ENCODE measurements at regions of chr16 and their contacts with region 1.

Region 1: DNA sequence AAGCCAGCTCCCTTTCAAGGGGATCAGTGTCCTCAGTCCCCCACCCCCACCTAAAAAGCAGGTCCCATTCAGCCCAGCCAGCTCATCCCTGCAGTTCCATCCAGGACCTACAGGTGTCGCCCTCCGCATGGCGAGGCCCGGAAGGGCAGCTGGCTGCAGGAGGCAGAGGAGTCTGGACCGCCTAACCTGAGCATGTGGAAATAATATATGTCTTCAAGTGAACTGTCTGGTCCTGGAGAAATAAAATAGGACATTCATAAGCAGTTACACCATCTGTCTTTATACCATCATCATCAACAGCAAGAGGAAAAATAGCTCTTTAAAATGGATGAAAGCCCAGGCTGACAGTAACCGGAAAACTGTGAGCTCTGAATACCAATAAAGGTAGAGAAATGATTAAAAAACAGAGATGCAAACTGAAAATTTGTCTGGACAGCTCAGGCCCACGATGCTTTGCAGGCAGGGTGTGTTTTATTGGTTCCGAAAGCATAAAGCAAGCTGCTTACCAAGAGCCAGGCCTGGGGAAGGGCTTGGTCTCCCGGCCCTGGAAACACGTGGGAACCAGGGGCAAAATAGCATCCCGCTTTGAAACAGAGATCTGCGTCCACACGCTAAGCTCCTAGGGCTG is 215.2 kb downstream of the ZFHX3 start:
- DNase-seq: peak; percentile 80
- H3K4me3 Mint-ChIP-seq: no peak overlapping the region
- H3K27ac Mint-ChIP-seq: no peak overlapping the region
- H3K4me1 Mint-ChIP-seq: peaks cover 4% of the 10 kb centered on the region
- H3K27me3 Mint-ChIP-seq: no peaks in the 10 kb centered on the region
- CTCF ChIP-seq: peak; percentile 89

Region 2: DNA sequence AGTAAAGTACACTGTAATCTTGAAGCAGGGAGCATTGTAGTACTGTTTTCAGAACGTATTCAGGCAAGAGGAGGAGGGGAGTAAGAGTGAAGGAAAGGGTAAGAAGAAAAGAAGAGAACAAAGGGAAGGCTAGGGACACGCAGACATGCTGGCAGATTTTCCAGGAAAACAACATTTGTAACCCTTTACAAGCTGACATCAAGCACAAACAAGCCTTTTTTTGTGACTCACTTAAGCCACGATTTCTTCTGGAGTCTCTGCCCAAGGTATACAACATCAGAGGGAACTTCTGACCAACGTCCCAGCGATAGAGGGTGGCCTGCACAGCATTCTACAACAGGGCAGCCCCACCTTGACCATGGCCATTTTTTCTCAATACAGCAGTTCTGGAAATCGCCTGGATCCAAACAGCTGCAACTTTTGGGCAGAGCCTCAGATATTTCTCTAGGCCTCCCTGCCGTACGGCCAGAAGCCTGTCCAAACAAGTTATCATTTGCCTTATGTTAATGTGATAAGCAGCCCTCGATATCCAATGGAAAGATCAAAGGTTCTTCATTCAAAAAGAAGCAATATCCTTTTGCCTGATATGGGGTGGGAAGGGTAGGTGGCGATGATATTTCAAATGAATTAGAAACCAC is 32.1 kb before region 1 on chr16:
- CTCF ChIA-PET with region 1: interaction called, 10 read pairs
- POLR2A ChIA-PET with region 1: no interaction called
- intact Hi-C with region 1: no loop called
- DNase-seq: no peak
- H3K4me3 Mint-ChIP-seq: no peak overlapping the region
- H3K27ac Mint-ChIP-seq: no peak overlapping the region
- H3K4me1 Mint-ChIP-seq: no peaks in the 10 kb centered on the region
- H3K27me3 Mint-ChIP-seq: no peaks in the 10 kb centered on the region
- CTCF ChIP-seq: no peak

Region 3: DNA sequence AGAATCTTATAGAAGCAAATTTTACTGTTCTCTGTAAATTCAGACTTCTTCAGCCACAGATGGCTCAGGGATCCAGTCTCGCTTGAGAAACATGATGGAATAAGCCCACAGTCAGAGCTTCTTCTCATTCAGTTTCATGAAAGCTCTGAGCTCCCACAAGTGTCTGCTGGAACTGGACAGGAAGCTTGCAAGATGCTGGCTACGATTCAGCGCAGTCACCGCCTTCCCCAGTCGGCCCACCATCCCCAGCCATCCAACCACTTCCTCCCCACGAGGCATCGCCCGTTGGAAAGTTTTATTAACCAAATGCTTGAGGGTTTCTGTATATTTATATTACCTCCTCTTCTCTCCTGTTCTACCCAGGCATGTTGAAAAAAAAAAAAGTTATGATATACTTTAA is 43.5 kb after region 1 on chr16:
- CTCF ChIA-PET with region 1: interaction called, 21 read pairs
- POLR2A ChIA-PET with region 1: interaction called, 3 read pairs
- intact Hi-C with region 1: no loop called
- DNase-seq: peak; percentile 77
- H3K4me3 Mint-ChIP-seq: peak overlapping the region; percentile 38
- H3K27ac Mint-ChIP-seq: peak overlapping the region; percentile 93
- H3K4me1 Mint-ChIP-seq: peaks cover 31% of the 10 kb centered on the region
- H3K27me3 Mint-ChIP-seq: no peaks in the 10 kb centered on the region
- CTCF ChIP-seq: no peak

Region 4: GRCh38 chr16:72979974-72980373 is 147.2 kb after region 1 on chr16:
- CTCF ChIA-PET with region 1: interaction called, 10 read pairs
- POLR2A ChIA-PET with region 1: interaction called, 3 read pairs
- intact Hi-C with region 1: no loop called
- DNase-seq: no peak
- H3K4me3 Mint-ChIP-seq: no peak overlapping the region
- H3K27ac Mint-ChIP-seq: no peak overlapping the region
- H3K4me1 Mint-ChIP-seq: peaks cover 2% of the 10 kb centered on the region
- H3K27me3 Mint-ChIP-seq: no peaks in the 10 kb centered on the region
- CTCF ChIP-seq: no peak

Region 5: GRCh38 chr16:73020362-73020884 is 187.7 kb after region 1 on chr16:
- CTCF ChIA-PET with region 1: interaction called, 10 read pairs
- POLR2A ChIA-PET with region 1: interaction called, 3 read pairs
- intact Hi-C with region 1: no loop called
- DNase-seq: peak; percentile 90
- H3K4me3 Mint-ChIP-seq: peak overlapping the region; percentile 45
- H3K27ac Mint-ChIP-seq: peak overlapping the region; percentile 10
- H3K4me1 Mint-ChIP-seq: peaks cover 33% of the 10 kb centered on the region
- H3K27me3 Mint-ChIP-seq: no peaks in the 10 kb centered on the region
- CTCF ChIP-seq: no peak

Region 6: GRCh38 chr16:73082608-73083007 is 249.9 kb after region 1 on chr16:
- CTCF ChIA-PET with region 1: interaction called, 16 read pairs
- POLR2A ChIA-PET with region 1: no interaction called
- intact Hi-C with region 1: no loop called
- DNase-seq: peak; percentile 92
- H3K4me3 Mint-ChIP-seq: peak overlapping the region; percentile 23
- H3K27ac Mint-ChIP-seq: peak overlapping the region; percentile 96
- H3K4me1 Mint-ChIP-seq: no peaks in the 10 kb centered on the region
- H3K27me3 Mint-ChIP-seq: no peaks in the 10 kb centered on the region
- CTCF ChIP-seq: no peak

Region 7: DNA sequence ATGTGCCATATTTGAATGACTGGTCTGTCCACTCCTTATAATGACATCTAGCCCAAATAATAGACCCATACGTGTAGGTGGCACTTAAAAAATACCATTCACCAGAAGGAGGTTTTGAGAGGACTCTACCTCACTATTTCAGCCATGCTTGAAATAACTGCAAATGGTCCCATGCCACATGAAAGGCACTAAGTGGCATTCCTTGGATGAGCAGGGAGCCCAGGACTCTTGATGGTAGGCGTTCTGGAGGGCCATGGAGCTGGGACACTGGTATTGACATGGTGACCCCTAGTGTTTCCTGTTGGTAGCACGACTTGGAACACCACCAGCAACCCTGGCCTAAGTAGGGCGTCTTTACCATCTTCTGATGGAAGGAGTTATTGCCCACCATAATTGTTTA is 363.9 kb after region 1 on chr16:
- CTCF ChIA-PET with region 1: interaction called, 48 read pairs
- POLR2A ChIA-PET with region 1: no interaction called
- intact Hi-C with region 1: loop called (anchors 1 kb)
- DNase-seq: peak; percentile 85
- H3K4me3 Mint-ChIP-seq: no peak overlapping the region
- H3K27ac Mint-ChIP-seq: no peak overlapping the region
- H3K4me1 Mint-ChIP-seq: no peaks in the 10 kb centered on the region
- H3K27me3 Mint-ChIP-seq: peaks cover 3% of the 10 kb centered on the region
- CTCF ChIP-seq: peak; percentile 79

Region 8: DNA sequence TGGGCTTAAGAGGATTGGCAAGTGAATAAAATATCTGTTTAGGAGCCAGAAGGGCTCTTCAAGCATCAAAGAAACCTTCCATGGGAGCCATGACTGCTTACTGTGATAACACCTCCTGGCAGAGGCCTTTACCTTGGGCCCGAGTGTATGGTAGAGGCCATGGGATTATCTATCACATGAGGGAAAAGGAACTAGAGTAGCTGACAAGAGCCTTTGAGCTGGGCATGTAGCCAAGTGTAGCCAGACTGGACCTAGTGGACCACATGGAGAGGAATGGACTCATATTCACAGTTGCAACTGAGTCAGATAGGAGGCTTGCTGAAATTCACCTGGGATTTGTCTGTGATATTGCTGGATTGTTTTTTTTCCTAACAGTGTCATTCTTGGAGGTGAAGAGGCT is 491.1 kb after region 1 on chr16:
- CTCF ChIA-PET with region 1: no interaction called
- POLR2A ChIA-PET with region 1: no interaction called
- intact Hi-C with region 1: no loop called
- DNase-seq: no peak
- H3K4me3 Mint-ChIP-seq: no peak overlapping the region
- H3K27ac Mint-ChIP-seq: no peak overlapping the region
- H3K4me1 Mint-ChIP-seq: no peaks in the 10 kb centered on the region
- H3K27me3 Mint-ChIP-seq: peaks cover 75% of the 10 kb centered on the region
- CTCF ChIP-seq: no peak

Measured in MCF 10A (cell line).